Activated B cell treated with CpG ODN at 0.5 μM for 24 hours (primary cell): ENCODE measurements at regions of chr4 and their contacts with region 1.

Region 1: GRCh38 chr4:56799824-56800756 is 21.4 kb downstream of the SPINK2 start:
- DNase-seq: peak; percentile 61
- ATAC-seq: peak; percentile 98
- H3K4me3 Mint-ChIP-seq: peak overlapping the region; percentile 95
- H3K27ac Mint-ChIP-seq: peak overlapping the region; percentile 92
- H3K4me1 Mint-ChIP-seq: peaks cover 32% of the 10 kb centered on the region
- H3K27me3 Mint-ChIP-seq: no peaks in the 10 kb centered on the region
- CTCF ChIP-seq: no peak

Region 2: GRCh38 chr4:56424697-56425514 is 375.2 kb before region 1 on chr4:
- CTCF ChIA-PET with region 1: interaction called, 13 read pairs
- POLR2A ChIA-PET with region 1: no interaction called
- intact Hi-C with region 1: loop called (anchors 1 kb)
- DNase-seq: no peak
- ATAC-seq: no peak
- H3K4me3 Mint-ChIP-seq: no peak overlapping the region
- H3K27ac Mint-ChIP-seq: no peak overlapping the region
- H3K4me1 Mint-ChIP-seq: peaks cover 12% of the 10 kb centered on the region
- H3K27me3 Mint-ChIP-seq: no peaks in the 10 kb centered on the region
- CTCF ChIP-seq: peak; percentile 75

Region 3: GRCh38 chr4:56505269-56506130 is 294.6 kb before region 1 on chr4 and contains the start of gene ARL9:
- CTCF ChIA-PET with region 1: no interaction called
- POLR2A ChIA-PET with region 1: no interaction called
- intact Hi-C with region 1: loop called (anchors 5 kb)
- DNase-seq: peak; percentile 52
- ATAC-seq: peak; percentile 86
- H3K4me3 Mint-ChIP-seq: peak within 1 kb of the TSS; percentile 88
- H3K27ac Mint-ChIP-seq: peak within 1 kb of the TSS; percentile 50
- H3K4me1 Mint-ChIP-seq: peaks cover 19% of the 10 kb centered on the region
- H3K27me3 Mint-ChIP-seq: peaks cover 2% of the 10 kb centered on the region
- CTCF ChIP-seq: no peak
- total RNA-seq, gene ARL9: 0.22 TPM in 1 of 2 replicates, not detected in the other

Region 4: GRCh38 chr4:56575820-56576429 is 224.2 kb before region 1 on chr4:
- CTCF ChIA-PET with region 1: interaction called, 36 read pairs
- POLR2A ChIA-PET with region 1: no interaction called
- intact Hi-C with region 1: loop called (anchors 1 kb)
- DNase-seq: no peak
- ATAC-seq: no peak
- H3K4me3 Mint-ChIP-seq: no peak overlapping the region
- H3K27ac Mint-ChIP-seq: no peak overlapping the region
- H3K4me1 Mint-ChIP-seq: peaks cover 2% of the 10 kb centered on the region
- H3K27me3 Mint-ChIP-seq: peaks cover 5% of the 10 kb centered on the region
- CTCF ChIP-seq: no peak

Region 5: GRCh38 chr4:56668298-56668697 is 131.8 kb before region 1 on chr4:
- CTCF ChIA-PET with region 1: interaction called, 3 read pairs
- POLR2A ChIA-PET with region 1: no interaction called
- intact Hi-C with region 1: loop called (anchors 1 kb)
- DNase-seq: no peak
- ATAC-seq: no peak
- H3K4me3 Mint-ChIP-seq: no peak overlapping the region
- H3K27ac Mint-ChIP-seq: no peak overlapping the region
- H3K4me1 Mint-ChIP-seq: no peaks in the 10 kb centered on the region
- H3K27me3 Mint-ChIP-seq: peaks cover 6% of the 10 kb centered on the region
- CTCF ChIP-seq: no peak

Region 6: DNA sequence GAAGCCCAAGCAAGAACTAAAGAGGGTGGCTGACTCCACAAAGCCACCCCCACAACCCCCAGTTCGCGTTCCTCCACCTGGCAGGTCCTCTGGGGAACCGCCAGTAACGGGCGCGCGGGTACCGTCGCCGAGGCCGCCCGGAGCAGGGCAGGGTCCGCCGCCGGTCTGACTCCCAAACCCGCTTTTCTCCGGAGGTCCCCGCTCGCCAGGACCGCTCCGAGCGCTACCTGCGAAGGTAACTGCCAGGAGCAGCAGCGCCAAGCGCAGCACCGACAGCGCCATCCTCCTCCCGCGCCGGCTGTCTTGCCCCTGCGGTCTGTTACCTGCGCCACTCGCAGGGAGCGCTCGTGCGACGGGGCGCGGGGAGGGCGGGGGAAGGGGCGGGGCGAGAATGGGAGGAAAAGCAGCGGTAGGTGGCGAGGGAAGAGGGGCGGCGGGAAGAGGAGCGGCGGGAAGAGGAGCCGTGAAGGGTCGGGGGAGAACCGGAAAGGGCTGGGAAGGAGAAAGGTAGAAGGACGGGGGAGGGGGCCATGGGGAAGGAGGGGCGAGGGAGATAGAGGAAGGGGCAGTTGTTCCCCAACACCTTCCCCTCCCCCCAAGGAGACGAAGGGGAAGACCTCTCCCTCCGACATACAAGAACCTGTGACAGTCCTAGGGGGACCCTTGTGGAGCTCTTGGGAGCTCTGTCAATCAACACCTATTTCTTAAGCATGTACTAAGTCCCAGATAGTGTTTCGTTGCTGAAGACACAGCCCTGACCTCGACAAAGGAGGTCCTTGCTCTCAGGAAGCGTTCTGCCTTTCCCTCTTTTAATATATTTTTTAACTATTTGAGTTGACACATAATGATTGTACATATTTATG is 21.5 kb after region 1 on chr4 and contains the start of gene SPINK2:
- CTCF ChIA-PET with region 1: interaction called, 5 read pairs
- POLR2A ChIA-PET with region 1: no interaction called
- intact Hi-C with region 1: loop called (anchors 1 kb)
- DNase-seq: peak; percentile 58
- ATAC-seq: peak; percentile 87
- H3K4me3 Mint-ChIP-seq: peak within 1 kb of the TSS; percentile 81
- H3K27ac Mint-ChIP-seq: peak within 1 kb of the TSS; percentile 24
- H3K4me1 Mint-ChIP-seq: peaks cover 31% of the 10 kb centered on the region
- H3K27me3 Mint-ChIP-seq: no peaks in the 10 kb centered on the region
- CTCF ChIP-seq: no peak
- total RNA-seq, gene SPINK2: 1.2 TPM in 1 of 2 replicates, not detected in the other

Region 7: DNA sequence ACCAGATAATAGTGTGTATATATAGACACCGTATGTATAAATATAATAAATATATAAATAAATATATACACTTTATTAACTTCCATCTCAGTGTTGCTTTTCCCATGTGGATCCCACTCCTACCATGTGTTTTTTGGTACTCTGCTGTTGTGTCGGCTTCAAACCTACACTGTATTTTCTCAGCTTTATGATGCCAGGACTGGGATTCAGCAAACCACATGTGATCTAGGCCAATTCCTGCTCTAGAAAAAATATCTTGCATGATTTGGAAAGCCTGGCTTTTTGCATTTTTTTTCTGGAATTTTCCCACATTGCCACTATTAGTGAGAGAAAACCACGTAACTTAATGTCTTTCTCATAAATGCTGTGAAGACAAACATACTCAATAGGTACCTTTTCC is 234.4 kb after region 1 on chr4:
- CTCF ChIA-PET with region 1: no interaction called
- POLR2A ChIA-PET with region 1: no interaction called
- intact Hi-C with region 1: no loop called
- DNase-seq: no peak
- ATAC-seq: no peak
- H3K4me3 Mint-ChIP-seq: no peak overlapping the region
- H3K27ac Mint-ChIP-seq: no peak overlapping the region
- H3K4me1 Mint-ChIP-seq: no peaks in the 10 kb centered on the region
- H3K27me3 Mint-ChIP-seq: peaks cover 4% of the 10 kb centered on the region
- CTCF ChIP-seq: no peak

Region 8: DNA sequence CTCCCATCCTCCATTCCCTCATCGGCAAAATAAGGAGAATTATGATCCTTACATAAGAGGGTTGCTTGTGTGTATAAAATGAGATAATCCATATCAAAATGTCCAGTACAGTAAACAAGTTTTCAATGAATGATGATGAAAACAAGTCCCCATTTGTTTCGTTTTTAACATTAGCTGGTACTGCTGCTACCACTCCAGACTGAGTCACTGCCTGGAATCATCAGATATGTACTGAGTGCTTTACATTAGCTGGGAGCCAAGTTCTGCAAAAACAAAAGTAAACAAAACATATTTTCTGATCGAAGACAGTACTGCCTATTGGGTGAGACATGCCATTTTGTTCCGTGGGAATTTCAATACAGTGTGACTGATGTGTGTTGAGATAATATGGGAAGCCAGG is 433.3 kb after region 1 on chr4:
- CTCF ChIA-PET with region 1: no interaction called
- POLR2A ChIA-PET with region 1: no interaction called
- intact Hi-C with region 1: no loop called
- DNase-seq: no peak
- ATAC-seq: no peak
- H3K4me3 Mint-ChIP-seq: no peak overlapping the region
- H3K27ac Mint-ChIP-seq: no peak overlapping the region
- H3K4me1 Mint-ChIP-seq: no peaks in the 10 kb centered on the region
- H3K27me3 Mint-ChIP-seq: no peaks in the 10 kb centered on the region
- CTCF ChIP-seq: no peak